ENCODE measurements at regions of chr1 and their contacts with region 1.

Region 1: GRCh38 chr1:110209715-110210603 is at the start of gene KCNC4:
- DNase-seq: peak; percentile 94
- ATAC-seq: peak; percentile 95
- total RNA-seq, gene KCNC4: 4.7 TPM

Region 2: DNA sequence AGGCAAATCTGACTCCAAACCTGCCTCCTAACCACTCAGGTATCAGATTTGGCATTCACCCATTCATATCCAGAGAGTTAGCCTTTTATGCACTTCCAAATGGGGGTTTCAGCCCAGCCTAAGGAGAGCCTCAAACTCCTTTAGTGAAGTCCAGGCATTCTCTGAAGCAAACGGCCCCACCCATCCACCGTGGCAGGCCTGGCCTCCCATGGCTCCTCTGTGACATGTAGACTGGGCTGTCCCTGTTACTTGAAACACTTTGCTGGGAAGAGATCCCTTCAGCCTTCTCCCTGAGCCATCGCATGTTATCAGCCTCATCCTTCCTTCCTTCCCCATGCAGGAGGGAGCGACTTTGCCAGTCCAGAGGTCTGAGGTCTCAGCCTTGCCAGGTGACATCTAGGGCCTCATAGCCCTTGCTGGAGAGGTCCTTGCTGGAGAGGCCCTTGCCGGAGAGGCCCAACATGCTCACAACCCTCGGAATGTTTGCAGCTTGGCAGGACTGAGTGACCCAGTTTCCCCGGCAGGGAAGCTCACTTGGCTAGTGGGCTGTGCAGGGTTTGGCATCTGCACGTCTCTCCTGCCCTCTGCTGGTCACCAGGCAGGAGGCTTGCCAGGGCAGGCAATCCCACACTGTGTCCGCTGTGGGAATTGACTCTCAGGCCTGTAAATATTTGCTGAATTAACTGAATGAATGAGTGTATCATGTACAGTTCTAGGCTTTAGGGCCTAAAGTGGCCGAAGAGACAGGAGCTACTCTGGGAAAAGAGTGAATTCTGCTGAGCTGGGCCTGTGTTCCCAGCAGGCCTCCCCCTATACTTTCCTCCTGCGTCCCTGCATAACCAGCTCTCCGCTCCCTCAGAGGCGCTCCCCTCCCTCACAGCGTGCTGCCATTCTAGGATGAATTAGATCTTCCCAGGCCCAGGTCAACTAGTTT is 102.5 kb after region 1 on chr1:
- intact Hi-C with region 1: loop called (anchors 2 kb)
- DNase-seq: peak; percentile 86
- ATAC-seq: peak; percentile 96

Measured in left ventricle myocardium superior (tissue), 1 donor.